OCI-LY7 (cell line): ENCODE measurements at regions of chr15 and their contacts with region 1.

Region 1: DNA sequence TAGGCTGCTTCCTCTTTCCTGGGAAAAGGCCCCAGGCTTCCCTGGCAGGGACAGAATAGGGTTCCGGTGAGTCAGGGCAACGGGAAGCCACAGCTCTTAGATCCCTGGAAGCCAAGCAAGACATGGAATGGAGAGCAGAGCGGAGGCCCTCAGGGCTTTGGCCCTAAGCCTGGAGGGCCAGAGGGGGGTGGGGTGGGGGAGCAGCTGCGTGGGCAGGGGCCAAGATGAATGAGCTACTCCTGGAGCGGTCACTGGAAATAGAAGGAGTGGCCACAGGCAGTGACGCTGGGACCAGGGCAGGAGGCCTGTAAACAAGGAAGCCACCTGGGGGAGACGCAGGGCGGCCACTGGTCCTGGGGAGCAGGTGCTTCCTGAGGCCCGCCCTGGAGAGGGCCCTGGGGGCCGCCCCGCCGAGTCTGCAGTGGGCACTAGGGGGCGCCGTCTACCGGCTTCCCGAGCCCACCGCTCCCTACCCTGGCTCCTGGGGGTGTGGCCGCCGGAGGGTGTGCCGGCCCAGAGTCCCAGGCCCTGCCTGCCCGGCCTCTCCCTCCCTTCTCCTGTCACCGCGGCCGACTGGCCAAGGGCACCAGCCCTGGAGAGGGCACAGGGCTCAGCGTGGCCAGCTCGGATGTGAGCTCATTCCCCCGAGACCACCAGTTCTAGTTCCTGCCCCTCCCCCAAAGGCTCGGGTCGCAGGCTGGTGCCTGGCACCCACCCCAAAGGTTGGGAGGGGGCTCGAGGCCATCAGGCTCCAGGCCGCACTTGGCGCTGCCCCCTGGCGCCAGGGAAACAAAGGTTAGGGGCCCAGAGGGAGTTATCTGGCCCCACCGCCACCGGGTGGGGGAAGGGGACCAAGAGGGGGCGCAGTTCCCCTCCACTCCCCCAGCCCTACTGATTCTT is 12.1 kb downstream of the VPS18 start:
- DNase-seq: peak; percentile 91
- H3K4me3 ChIP-seq: peak overlapping the region; percentile 66
- H3K27ac ChIP-seq: peak overlapping the region; percentile 72
- H3K4me1 ChIP-seq: peaks cover 69% of the 10 kb centered on the region
- CTCF ChIP-seq: peak; percentile 87

Region 2: DNA sequence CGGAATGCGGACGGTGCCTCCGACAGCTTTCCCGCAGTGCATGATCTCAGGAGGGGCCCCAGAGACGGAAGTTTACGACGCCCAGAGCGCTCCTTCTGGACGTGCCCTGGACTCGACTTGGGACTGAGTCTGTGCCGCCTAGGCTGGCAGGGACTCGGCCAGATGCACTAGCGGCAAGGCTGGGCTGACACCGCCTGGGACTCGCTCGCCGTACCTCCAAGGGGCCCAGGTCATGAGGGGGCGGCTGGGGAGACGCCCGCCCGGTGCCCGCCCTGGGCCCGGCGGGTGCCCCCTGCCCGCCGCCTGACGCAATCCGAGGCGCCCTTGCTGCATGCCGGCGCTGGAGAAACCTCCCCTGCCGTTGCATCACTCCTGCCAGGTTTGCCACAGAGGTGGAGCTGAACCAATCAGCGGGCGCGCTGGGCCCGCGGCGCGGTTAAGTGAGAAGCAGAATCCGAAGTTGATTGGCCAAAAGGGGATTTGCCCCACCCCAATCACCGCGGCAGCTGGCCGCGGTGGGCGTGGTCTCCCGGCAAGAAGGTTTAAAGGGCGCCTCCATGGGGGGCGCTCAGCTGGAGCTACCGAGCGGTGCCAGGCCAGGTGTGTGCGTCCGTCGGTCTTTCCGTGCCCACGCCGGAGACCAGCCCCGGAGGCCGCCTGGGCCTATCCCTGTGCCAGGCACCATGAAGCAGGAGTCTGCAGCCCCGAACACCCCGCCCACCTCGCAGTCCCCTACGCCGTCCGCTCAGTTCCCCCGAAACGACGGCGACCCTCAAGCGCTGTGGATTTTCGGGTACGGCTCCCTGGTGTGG is 46.8 kb after region 1 on chr15 and contains the start of gene CHAC1:
- CTCF ChIA-PET with region 1: interaction called, 3 read pairs
- POLR2A ChIA-PET with region 1: interaction called, 4 read pairs
- intact Hi-C with region 1: loop called (anchors 1 kb)
- DNase-seq: peak; percentile 99
- H3K4me3 ChIP-seq: peak within 1 kb of the TSS; percentile 83
- H3K27ac ChIP-seq: peak within 1 kb of the TSS; percentile 69
- H3K4me1 ChIP-seq: peaks cover 26% of the 10 kb centered on the region
- CTCF ChIP-seq: peak; percentile 19; the same call in 1 of the 2 replicates
- total RNA-seq, gene CHAC1: 40.4 and 41.4 TPM in 2 replicates

Region 3: GRCh38 chr15:40992241-40992741 is 86.0 kb after region 1 on chr15:
- CTCF ChIA-PET with region 1: no interaction called
- POLR2A ChIA-PET with region 1: no interaction called
- intact Hi-C with region 1: no loop called
- DNase-seq: no peak
- H3K4me3 ChIP-seq: no peak overlapping the region
- H3K27ac ChIP-seq: no peak overlapping the region
- H3K4me1 ChIP-seq: no peaks in the 10 kb centered on the region
- CTCF ChIP-seq: no peak

Region 4: GRCh38 chr15:41022487-41023090 is 116.2 kb after region 1 on chr15:
- CTCF ChIA-PET with region 1: interaction called, 3 read pairs
- POLR2A ChIA-PET with region 1: no interaction called
- intact Hi-C with region 1: loop called (anchors 1 kb)
- DNase-seq: peak; percentile 55
- H3K4me3 ChIP-seq: no peak overlapping the region
- H3K27ac ChIP-seq: no peak overlapping the region
- H3K4me1 ChIP-seq: no peaks in the 10 kb centered on the region
- CTCF ChIP-seq: peak; percentile 82

Region 5: DNA sequence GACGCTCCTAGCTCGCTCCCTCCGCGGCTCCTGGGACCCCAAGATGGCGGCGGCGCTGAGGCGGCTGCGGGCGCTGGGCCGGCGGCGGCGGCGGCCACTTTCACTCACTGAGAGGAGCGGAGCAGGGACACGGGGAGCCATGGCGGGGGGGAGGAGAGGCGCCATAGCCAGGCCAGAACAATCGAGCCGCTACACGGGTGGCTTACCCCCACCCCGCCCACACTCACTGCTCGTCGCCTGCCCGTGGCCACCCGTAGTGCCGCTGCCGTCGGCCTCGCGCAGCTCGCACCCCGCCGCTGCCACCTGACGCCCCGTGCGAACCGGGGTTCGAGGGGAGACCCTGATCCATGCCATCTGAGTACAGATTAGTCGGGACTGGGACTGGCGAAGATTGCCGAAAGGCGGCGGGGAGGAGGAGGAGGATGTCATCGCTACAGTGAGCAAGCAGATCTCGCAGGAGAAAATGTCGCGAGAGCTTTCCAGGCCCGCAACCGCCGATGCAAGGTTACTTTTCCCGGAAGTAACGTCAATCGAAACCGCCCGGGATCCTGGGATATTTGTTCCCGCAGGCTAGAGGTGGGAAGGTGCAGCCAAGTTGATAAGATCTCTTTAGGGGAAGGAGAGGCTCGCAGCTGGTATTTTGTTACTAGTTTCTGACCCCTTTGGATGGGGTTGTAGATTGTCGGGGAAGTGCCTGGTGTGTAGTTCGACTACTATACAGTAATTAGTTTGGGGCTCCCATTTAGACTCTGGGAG is 210.0 kb after region 1 on chr15 and contains the start of gene INO80:
- CTCF ChIA-PET with region 1: no interaction called
- POLR2A ChIA-PET with region 1: no interaction called
- intact Hi-C with region 1: loop called (anchors 2 kb)
- DNase-seq: peak; percentile 98
- H3K4me3 ChIP-seq: peak within 1 kb of the TSS; percentile 77
- H3K27ac ChIP-seq: peak within 1 kb of the TSS; percentile 74
- H3K4me1 ChIP-seq: peaks cover 13% of the 10 kb centered on the region
- CTCF ChIP-seq: no peak
- total RNA-seq, gene INO80: 31.7 and 47.1 TPM in 2 replicates

Region 6: DNA sequence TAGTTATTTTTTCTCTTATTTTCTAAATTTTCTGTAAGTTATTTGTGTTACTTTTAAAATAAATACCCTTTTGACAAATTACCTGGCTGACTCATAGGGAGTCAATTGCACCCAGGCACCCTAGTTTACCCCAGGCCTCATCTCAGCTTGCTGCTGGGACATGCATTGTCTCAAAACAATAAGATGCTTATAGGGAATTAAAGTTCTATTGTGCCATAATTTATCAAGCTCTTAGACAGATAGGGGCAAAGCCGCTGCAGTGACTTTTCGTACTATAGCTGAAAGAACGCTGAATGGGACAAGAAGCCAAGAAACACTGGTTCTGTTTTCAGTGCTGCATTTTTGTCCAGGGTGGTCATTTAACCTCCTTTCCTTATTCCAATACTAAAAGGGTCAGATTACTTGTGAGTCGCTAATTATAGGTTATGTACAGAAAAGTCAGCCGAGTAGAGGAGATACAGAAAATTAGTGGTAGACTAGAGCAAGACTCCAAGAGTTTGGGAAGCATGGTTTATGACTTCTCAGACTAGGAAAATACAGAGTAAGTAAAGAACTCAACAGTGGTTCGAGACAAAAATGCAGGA is 274.0 kb after region 1 on chr15:
- CTCF ChIA-PET with region 1: interaction called, 3 read pairs
- POLR2A ChIA-PET with region 1: interaction called, 3 read pairs
- intact Hi-C with region 1: loop called (anchors 2 kb)
- DNase-seq: no peak
- H3K4me3 ChIP-seq: no peak overlapping the region
- H3K27ac ChIP-seq: no peak overlapping the region
- H3K4me1 ChIP-seq: no peaks in the 10 kb centered on the region
- CTCF ChIP-seq: no peak

Region 7: DNA sequence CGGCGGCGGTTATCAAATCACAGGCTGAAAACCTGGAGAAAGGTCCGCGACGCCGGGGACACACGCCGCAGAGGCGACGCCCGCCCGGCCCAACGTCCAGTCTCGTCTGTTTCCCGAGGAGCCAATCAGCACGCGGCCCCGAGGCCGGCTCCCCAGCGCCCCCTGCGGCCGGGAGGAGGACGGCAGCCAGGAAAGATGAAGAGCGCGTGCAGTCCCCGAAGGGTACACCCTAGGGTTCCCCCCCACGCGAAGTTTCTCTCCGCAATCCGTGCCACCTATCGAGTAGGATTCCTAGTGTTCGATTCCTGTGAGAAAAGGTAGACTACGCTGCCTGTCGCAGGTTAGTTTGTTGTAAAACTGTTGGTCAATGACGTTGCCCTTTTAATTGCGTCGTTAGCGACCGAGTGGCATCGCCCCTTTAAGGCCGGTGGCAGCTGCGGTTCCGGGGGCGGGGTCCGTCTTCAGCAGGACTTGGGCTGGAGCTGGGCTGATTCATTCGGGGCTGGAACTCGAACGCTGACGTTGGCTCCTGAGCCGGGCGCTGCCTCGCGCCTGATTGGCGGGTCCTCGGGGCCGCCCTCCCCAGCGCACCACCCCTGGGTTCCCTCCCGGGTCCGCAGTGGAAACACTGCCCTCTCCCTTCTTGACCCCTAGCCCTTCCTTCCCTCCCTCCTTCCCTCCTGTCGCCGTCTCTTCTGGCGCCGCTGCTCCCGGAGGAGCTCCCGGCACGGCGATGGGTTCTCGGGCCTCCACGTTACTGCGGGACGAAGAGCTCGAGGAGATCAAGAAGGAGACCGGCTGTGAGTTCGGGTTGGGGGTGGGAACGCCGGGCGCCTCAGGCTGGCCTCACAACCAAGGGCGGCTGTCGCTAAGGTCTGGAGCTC is 324.6 kb after region 1 on chr15 and contains the starts of genes CHP1 and EXD1:
- CTCF ChIA-PET with region 1: interaction called, 4 read pairs
- POLR2A ChIA-PET with region 1: interaction called, 3 read pairs
- intact Hi-C with region 1: loop called (anchors 1 kb)
- DNase-seq: peak; percentile 96
- H3K4me3 ChIP-seq: peak within 1 kb of the TSS; percentile 86
- H3K27ac ChIP-seq: peak within 1 kb of the TSS; percentile 47
- H3K4me1 ChIP-seq: peaks cover 16% of the 10 kb centered on the region
- CTCF ChIP-seq: peak; percentile 95
- total RNA-seq, gene CHP1: 19.4 and 32.4 TPM in 2 replicates
- total RNA-seq, gene EXD1: not detected in 2 replicates